B cell (primary cell): ENCODE measurements at regions of chr3 and their contacts with region 1.

Region 1: DNA sequence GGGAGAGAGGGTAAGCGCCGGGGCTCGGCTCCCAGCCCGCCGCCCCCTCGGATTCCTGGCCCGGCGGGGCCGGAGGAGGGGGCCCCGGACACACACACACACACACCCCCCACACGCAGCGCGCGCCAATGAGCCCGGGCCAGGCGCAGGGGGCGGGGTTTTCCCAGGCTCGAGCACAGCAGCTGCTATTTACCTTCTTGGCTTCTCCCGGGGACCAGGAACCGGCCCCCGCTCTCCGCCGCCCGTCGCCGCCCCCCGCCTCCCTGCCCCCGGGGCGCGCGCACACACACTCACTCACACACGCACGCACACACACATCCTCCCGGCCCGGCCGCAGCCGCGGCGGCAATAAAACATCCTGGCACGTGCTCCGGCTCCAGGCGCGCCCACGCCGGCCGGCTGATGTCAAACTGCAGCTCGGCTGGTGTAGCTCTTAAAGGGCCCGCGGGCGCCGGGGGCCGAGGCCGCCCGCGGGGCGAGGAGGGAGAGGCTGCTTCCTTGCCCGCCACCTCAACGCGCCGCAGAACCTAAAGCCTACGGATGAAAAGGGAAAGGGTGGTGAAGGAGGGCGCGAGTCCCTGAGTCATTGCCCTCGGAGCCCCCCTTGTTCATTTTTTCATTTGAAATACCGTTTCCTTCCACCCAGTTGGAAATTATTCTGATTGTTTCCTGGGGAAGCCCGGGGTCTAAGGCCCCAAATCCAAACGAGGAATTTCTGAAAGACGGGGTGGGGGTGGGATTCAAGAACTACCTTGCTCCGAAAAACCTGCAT is 1.0 kb upstream of the HES1 start:
- DNase-seq: peak; percentile 96
- ATAC-seq: peak; percentile 37
- H3K4me3 ChIP-seq: peak overlapping the region; percentile 48 to 80 (median 72)
- H3K4me3 Mint-ChIP-seq: peak overlapping the region; percentile 94
- H3K27ac ChIP-seq: peak overlapping the region; percentile 88 to 94
- H3K27ac Mint-ChIP-seq: peak overlapping the region; percentile 99
- H3K4me1 ChIP-seq: peaks cover 66 to 83% of the 10 kb centered on the region in 2 donors
- H3K4me1 Mint-ChIP-seq: peaks cover 72% of the 10 kb centered on the region
- H3K27me3 ChIP-seq: no peaks in the 10 kb centered on the region
- H3K27me3 Mint-ChIP-seq: peaks cover 4% of the 10 kb centered on the region
- CTCF ChIP-seq: no peak

Region 2: GRCh38 chr3:193693774-193694173 is 441.2 kb before region 1 on chr3:
- CTCF ChIA-PET with region 1: interaction called, 3 read pairs
- POLR2A ChIA-PET with region 1: no interaction called
- intact Hi-C with region 1: loop called (anchors 10 kb)
- DNase-seq: peak; percentile 85
- ATAC-seq: peak; percentile 90
- H3K4me3 ChIP-seq: no peak overlapping the region
- H3K4me3 Mint-ChIP-seq: peak overlapping the region; percentile 11
- H3K27ac ChIP-seq: peak overlapping the region; percentile 1 to 88
- H3K27ac Mint-ChIP-seq: peak overlapping the region; percentile 71
- H3K4me1 ChIP-seq: peaks cover 13 to 18% of the 10 kb centered on the region in 2 donors
- H3K4me1 Mint-ChIP-seq: peaks cover 18% of the 10 kb centered on the region
- H3K27me3 ChIP-seq: no peaks in the 10 kb centered on the region
- H3K27me3 Mint-ChIP-seq: no peaks in the 10 kb centered on the region
- CTCF ChIP-seq: no peak

Region 3: DNA sequence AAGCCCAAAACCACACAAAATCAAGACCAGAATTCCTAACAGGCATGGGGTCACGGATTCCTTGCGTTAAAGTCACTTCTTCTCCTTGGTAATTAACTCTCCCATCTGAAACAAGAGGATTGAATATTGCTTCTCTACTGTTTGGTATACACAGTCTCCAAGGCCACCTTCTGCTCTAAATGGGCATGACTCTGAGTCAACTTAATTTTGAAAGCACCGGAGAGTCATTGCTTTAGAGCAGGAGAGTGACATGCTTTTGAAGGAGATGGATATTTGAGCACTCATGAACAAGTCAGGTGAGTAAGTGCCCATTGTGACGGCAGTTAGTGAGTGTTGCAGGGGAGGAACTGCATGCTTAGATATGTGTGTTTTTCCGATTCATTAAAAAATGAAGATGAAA is 411.9 kb before region 1 on chr3:
- CTCF ChIA-PET with region 1: no interaction called
- POLR2A ChIA-PET with region 1: no interaction called
- intact Hi-C with region 1: no loop called
- DNase-seq: no peak
- ATAC-seq: no peak
- H3K4me3 ChIP-seq: no peak overlapping the region
- H3K4me3 Mint-ChIP-seq: no peak overlapping the region
- H3K27ac ChIP-seq: no peak overlapping the region
- H3K27ac Mint-ChIP-seq: no peak overlapping the region
- H3K4me1 ChIP-seq: no peaks in the 10 kb centered on the region
- H3K4me1 Mint-ChIP-seq: no peaks in the 10 kb centered on the region
- H3K27me3 ChIP-seq: peaks cover 0 to 4% (median 0%) of the 10 kb centered on the region in 4 experiments
- H3K27me3 Mint-ChIP-seq: peaks cover 8% of the 10 kb centered on the region
- CTCF ChIP-seq: no peak

Region 4: DNA sequence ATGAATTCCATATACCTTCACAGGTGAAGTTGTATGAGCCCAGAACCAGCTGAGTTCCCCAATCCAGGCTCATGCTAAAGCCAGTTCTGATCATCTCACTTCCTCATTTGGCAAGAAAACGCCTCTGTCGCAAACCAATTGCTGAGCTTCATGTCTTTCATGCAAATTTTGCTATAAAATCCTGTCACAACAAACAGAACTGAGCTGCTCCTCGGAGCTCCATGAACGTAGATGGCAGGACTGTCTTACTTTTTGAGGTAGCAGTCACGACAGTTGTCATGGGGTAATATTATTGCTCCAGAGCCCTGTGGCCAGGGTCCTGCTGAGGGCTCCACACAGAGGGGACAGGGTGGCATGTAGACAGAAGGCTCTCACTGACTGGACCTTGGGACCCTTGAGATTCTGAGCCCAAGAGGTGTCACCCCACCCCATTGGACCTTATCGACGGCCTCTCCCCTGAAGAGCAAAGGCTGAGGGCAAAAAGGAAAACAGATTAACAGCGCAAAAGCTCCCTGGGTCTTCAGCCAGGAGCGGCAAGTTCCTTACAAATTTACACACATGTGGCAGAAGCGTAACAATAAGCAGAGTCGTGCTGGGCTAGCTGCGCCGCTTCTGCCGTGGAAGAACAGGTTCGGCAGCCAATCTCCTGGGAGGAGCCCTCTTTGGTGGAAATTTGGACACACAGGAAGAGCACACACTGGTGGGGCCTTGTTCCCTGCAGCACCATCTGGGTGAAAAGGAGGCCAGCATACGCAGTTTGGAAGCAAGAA is 292.7 kb before region 1 on chr3:
- CTCF ChIA-PET with region 1: interaction called, 6 read pairs
- POLR2A ChIA-PET with region 1: no interaction called
- intact Hi-C with region 1: loop called (anchors 2 kb)
- DNase-seq: peak; percentile 88
- ATAC-seq: peak; percentile 95
- H3K4me3 ChIP-seq: peak overlapping the region in 4 of 5 experiments; percentile 13 to 47 (median 32)
- H3K4me3 Mint-ChIP-seq: peak overlapping the region; percentile 84
- H3K27ac ChIP-seq: peak overlapping the region in 1 of 2 donors; percentile 39
- H3K27ac Mint-ChIP-seq: peak overlapping the region; percentile 91
- H3K4me1 ChIP-seq: peaks cover 19 to 26% of the 10 kb centered on the region in 2 donors
- H3K4me1 Mint-ChIP-seq: peaks cover 39% of the 10 kb centered on the region
- H3K27me3 ChIP-seq: peaks cover 0 to 17% (median 0%) of the 10 kb centered on the region in 4 experiments
- H3K27me3 Mint-ChIP-seq: peaks cover 4% of the 10 kb centered on the region
- CTCF ChIP-seq: no peak

Region 5: DNA sequence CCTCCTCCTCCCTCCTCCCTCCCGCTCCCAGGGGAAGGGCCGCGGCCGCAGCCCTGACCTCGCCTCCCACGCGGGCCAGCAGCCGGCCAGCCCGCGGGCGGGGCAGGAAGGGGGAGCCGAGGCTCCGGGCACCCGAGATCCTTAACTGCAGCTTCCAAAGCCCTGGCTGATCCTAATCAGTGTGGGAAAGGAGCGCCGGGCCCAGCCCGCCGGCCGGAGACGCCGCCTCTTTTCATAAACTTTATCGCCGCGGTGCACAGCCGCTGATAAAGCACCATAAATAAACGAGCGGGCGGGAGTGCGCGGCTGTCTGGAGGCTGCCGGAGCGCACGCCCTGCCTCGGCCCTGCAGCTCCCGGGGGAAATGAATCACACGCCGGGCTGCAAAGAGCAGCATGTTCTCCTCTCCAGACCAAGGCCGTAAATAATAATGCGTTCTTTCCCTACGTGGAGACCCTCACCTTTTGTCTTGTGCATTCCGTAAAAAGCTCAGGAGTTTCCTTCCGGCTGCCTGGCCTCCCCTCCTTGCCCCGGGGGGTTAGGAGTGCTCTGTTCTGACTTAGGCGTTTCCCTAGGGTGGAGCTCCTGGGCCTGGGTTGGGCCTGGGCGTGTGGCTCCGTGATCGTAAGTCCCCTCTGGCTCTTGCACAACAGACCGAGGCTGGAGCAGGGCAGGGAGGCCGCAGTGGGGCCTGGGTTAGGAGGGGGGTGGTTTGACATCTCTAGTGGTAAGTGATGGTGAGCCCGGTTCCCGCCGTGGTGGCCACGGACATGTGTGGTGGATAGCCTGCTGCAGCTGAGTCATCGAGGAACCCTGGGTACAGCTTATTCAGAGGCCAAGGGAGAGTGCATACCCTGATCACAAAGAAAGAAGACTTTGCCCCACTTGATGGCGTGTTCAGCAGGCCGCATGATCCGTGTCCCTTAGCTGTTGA is 131.6 kb before region 1 on chr3:
- CTCF ChIA-PET with region 1: interaction called, 6 read pairs
- POLR2A ChIA-PET with region 1: interaction called, 4 read pairs
- intact Hi-C with region 1: loop called (anchors 1 kb)
- DNase-seq: peak; percentile 69
- ATAC-seq: peak; percentile 93
- H3K4me3 ChIP-seq: peak overlapping the region in 4 of 5 experiments; percentile 31 to 76 (median 56)
- H3K4me3 Mint-ChIP-seq: peak overlapping the region; percentile 85
- H3K27ac ChIP-seq: peak overlapping the region in 1 of 2 donors; percentile 22
- H3K27ac Mint-ChIP-seq: peak overlapping the region; percentile 61
- H3K4me1 ChIP-seq: peaks cover 32 to 38% of the 10 kb centered on the region in 2 donors
- H3K4me1 Mint-ChIP-seq: peaks cover 33% of the 10 kb centered on the region
- H3K27me3 ChIP-seq: peaks cover 0 to 18% (median 0%) of the 10 kb centered on the region in 4 experiments
- H3K27me3 Mint-ChIP-seq: peaks cover 13% of the 10 kb centered on the region
- CTCF ChIP-seq: no peak

Region 6: DNA sequence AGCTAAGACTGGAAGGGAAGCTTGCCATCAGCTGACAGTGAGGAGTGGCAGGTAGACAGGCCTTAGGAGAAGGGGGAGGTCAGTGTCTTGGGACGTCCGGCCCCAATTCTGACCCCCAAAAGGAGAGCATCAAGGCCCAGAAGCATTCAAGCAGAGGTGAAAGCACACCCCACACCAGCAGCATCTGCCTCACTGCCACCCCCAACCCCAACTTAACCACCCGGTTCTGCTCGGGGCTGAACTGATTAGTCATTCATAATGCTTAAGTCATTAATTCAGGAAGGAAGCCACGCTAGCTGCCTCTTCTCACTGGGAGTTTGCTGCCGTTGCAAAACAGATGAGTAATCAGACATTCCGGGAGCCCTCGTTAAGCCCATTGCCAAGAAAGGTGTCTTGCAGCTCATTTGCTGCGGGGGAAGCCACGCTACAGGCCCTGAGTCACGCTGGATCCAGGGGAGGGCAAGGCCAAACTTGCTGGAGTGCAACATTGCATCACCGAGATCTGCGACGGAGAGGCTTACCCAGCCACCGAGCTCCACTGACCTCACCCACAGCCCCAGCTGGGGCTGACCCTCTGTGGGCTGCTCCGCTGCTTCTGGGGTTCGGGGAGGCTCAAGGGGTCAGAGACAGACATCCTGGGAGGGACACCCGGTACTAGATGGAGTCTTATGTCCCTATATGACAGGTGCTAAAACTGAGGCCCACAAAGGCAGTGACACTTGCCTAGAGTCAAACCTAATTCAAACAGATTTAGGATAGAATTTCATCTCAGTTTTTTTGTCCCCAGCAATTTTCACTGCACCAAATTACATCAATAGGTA is 45.4 kb before region 1 on chr3:
- CTCF ChIA-PET with region 1: interaction called, 8 read pairs
- POLR2A ChIA-PET with region 1: interaction called, 3 read pairs
- intact Hi-C with region 1: loop called (anchors 5 kb)
- DNase-seq: peak; percentile 40
- ATAC-seq: peak; percentile 74
- H3K4me3 ChIP-seq: no peak overlapping the region
- H3K4me3 Mint-ChIP-seq: peak overlapping the region; percentile 29
- H3K27ac ChIP-seq: no peak overlapping the region
- H3K27ac Mint-ChIP-seq: peak overlapping the region; percentile 68
- H3K4me1 ChIP-seq: peaks cover 17 to 22% of the 10 kb centered on the region in 2 donors
- H3K4me1 Mint-ChIP-seq: peaks cover 27% of the 10 kb centered on the region
- H3K27me3 ChIP-seq: no peaks in the 10 kb centered on the region
- H3K27me3 Mint-ChIP-seq: no peaks in the 10 kb centered on the region
- CTCF ChIP-seq: no peak

Region 7: DNA sequence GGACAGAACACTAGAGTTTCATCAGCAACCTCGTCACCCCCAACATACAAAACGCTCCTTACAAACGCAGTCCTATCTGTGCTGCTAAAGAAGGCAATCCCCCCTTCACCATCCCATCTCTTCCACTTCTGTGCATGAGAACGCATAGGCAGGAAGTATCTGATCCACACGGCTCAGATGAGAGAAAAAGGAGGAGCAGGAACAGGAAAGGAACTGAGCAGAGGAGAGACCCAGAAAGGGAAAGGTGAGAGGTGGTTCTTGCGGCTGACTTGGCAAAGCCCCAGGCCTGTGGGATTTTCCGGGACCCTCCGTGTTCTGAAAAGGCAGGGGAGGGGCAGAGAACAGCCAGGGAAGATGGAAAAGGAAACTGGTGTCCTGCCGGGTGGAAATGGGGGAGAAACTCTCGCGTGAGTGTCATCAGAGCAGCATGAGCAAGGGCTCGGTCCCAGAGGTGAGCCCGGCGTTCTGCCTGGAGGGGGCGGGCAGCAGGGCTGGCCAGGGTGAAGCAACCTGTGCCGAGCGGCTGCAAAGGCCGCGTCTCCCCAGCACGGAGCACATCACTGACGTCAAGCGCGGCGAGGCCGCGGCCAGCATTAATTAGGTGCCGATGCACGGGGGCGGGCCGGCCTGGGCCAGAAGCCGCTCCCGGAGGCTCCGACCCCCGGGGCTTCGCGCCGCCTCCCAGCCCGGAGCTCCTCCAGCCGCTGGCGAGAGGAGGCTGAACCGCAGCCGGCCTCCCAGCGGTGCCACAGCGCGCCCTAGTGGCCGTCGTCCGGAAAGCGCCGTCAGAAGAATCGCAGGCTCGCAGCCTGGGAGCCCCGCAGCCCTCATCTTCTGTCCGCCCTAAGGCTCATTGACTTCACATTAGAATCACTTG is 180.4 kb after region 1 on chr3:
- CTCF ChIA-PET with region 1: interaction called, 124 read pairs
- POLR2A ChIA-PET with region 1: no interaction called
- intact Hi-C with region 1: no loop called
- DNase-seq: peak; percentile 92
- ATAC-seq: peak; percentile 85
- H3K4me3 ChIP-seq: peak overlapping the region; percentile 17 to 72 (median 50)
- H3K4me3 Mint-ChIP-seq: peak overlapping the region; percentile 80
- H3K27ac ChIP-seq: no peak overlapping the region
- H3K27ac Mint-ChIP-seq: peak overlapping the region; percentile 37
- H3K4me1 ChIP-seq: peaks cover 24 to 25% of the 10 kb centered on the region in 2 donors
- H3K4me1 Mint-ChIP-seq: peaks cover 28% of the 10 kb centered on the region
- H3K27me3 ChIP-seq: peaks cover 0 to 74% (median 30%) of the 10 kb centered on the region in 4 experiments
- H3K27me3 Mint-ChIP-seq: peaks cover 57% of the 10 kb centered on the region
- CTCF ChIP-seq: peak; percentile 98

Region 8: GRCh38 chr3:195727606-195728195 is 1592.8 kb after region 1 on chr3:
- CTCF ChIA-PET with region 1: no interaction called
- POLR2A ChIA-PET with region 1: no interaction called
- intact Hi-C with region 1: no loop called
- DNase-seq: no peak
- ATAC-seq: peak; percentile 36
- H3K4me3 ChIP-seq: no peak overlapping the region
- H3K4me3 Mint-ChIP-seq: no peak overlapping the region
- H3K27ac ChIP-seq: no peak overlapping the region
- H3K27ac Mint-ChIP-seq: peak overlapping the region; percentile 3
- H3K4me1 ChIP-seq: peaks cover 0 to 7% of the 10 kb centered on the region in 2 donors
- H3K4me1 Mint-ChIP-seq: peaks cover 9% of the 10 kb centered on the region
- H3K27me3 ChIP-seq: no peaks in the 10 kb centered on the region
- H3K27me3 Mint-ChIP-seq: peaks cover 21% of the 10 kb centered on the region
- CTCF ChIP-seq: no peak